ENCODE measurements at regions of chr5 and their contacts with region 1.

Region 1: GRCh38 chr5:171667341-171668096 is 118.1 kb upstream of the SMIM23 start:
- DNase-seq: peak; percentile 82
- H3K4me3 ChIP-seq: peak overlapping the region in 1 of 3 experiments; percentile 1
- H3K27ac ChIP-seq: peak overlapping the region; percentile 36
- H3K4me1 ChIP-seq: peaks cover 13% of the 10 kb centered on the region
- H3K27me3 ChIP-seq: no peaks in the 10 kb centered on the region
- CTCF ChIP-seq: peak; percentile 17 to 39

Region 2: GRCh38 chr5:171437286-171437821 is 230.2 kb before region 1 on chr5:
- CTCF ChIA-PET with region 1: no interaction called
- dilution Hi-C with region 1: no loop called
- in situ Hi-C with region 1: no loop called
- intact Hi-C with region 1: no loop called
- DNase-seq: no peak
- H3K4me3 ChIP-seq: no peak overlapping the region
- H3K27ac ChIP-seq: no peak overlapping the region
- H3K4me1 ChIP-seq: no peaks in the 10 kb centered on the region
- H3K27me3 ChIP-seq: no peaks in the 10 kb centered on the region
- CTCF ChIP-seq: no peak

Region 3: GRCh38 chr5:171736976-171737891 is 69.7 kb after region 1 on chr5:
- CTCF ChIA-PET with region 1: no interaction called
- dilution Hi-C with region 1: no loop called
- in situ Hi-C with region 1: no loop called
- intact Hi-C with region 1: no loop called
- DNase-seq: no peak
- H3K4me3 ChIP-seq: no peak overlapping the region
- H3K27ac ChIP-seq: no peak overlapping the region
- H3K4me1 ChIP-seq: no peaks in the 10 kb centered on the region
- H3K27me3 ChIP-seq: peaks cover 2% of the 10 kb centered on the region
- CTCF ChIP-seq: no peak

Region 4: GRCh38 chr5:171863930-171864329 is 196.4 kb after region 1 on chr5:
- CTCF ChIA-PET with region 1: no interaction called
- dilution Hi-C with region 1: no loop called
- in situ Hi-C with region 1: no loop called
- intact Hi-C with region 1: loop called (anchors 5 kb)
- DNase-seq: peak; percentile 81
- H3K4me3 ChIP-seq: no peak overlapping the region
- H3K27ac ChIP-seq: peak overlapping the region; percentile 31
- H3K4me1 ChIP-seq: peaks cover 19% of the 10 kb centered on the region
- H3K27me3 ChIP-seq: no peaks in the 10 kb centered on the region
- CTCF ChIP-seq: no peak